AG04450 (cell line): ENCODE measurements at regions of chr1 and their contacts with region 1.

Region 1: GRCh38 chr1:203273206-203273868 is 32.0 kb upstream of the BTG2 start:
- DNase-seq: no peak
- H3K4me3 ChIP-seq: 0 out of 2 replicates have a peak overlapping the region, but pooled peaks have one; percentile 20
- H3K27ac ChIP-seq: no peak overlapping the region
- H3K27me3 ChIP-seq: peaks cover 9% of the 10 kb centered on the region
- CTCF ChIP-seq: peak; percentile 98

Region 2: DNA sequence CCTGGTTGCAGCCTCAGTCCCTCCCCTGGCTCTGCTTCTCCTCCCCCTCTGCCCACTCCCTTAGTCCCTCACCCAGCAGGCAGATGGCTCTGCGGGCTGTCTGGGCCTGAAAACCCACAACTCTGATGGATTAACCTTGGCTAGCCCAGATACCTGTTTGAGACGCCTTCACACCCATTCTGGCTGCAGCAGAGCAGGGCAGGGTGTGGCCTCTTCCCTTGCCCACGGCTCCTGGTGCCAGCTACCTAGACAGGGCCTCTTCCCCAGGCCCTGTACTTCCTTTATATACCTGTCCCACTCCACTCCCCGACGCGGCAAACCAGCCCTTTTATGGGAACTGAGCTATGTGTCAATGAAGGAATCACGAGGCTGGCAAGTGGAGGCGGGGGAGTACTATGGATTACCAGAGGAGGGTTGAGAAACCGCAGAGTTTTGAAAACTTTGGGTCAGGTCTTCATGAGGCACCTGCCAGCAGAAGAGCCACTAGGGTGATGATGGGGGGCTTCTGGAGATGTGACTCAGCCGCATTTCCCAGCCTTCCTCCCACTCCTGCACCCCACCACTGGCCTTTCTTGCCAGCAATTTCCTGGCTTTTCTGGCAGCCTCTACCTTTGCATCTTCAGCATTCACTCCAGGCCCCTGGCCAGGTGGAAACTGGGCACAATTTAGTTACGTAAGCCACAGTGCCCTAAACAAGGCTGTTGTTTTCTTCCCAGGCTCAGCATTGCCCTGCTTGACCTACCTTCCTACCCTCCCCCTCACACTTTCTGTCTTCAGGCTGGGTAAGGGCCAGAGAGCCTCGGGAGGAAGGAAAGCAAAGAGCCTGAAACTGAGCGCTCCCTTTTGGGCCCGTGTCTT is 86.7 kb before region 1 on chr1 and contains the start of gene CHI3L1:
- CTCF ChIA-PET with region 1: no interaction called
- POLR2A ChIA-PET with region 1: no interaction called
- DNase-seq: no peak
- H3K4me3 ChIP-seq: no peak within 1 kb of the TSS
- H3K27ac ChIP-seq: no peak within 1 kb of the TSS
- H3K27me3 ChIP-seq: peaks cover 10% of the 10 kb centered on the region
- CTCF ChIP-seq: no peak
- polyA plus RNA-seq, gene CHI3L1: 6.4 and 8.9 TPM in 2 replicates

Region 3: DNA sequence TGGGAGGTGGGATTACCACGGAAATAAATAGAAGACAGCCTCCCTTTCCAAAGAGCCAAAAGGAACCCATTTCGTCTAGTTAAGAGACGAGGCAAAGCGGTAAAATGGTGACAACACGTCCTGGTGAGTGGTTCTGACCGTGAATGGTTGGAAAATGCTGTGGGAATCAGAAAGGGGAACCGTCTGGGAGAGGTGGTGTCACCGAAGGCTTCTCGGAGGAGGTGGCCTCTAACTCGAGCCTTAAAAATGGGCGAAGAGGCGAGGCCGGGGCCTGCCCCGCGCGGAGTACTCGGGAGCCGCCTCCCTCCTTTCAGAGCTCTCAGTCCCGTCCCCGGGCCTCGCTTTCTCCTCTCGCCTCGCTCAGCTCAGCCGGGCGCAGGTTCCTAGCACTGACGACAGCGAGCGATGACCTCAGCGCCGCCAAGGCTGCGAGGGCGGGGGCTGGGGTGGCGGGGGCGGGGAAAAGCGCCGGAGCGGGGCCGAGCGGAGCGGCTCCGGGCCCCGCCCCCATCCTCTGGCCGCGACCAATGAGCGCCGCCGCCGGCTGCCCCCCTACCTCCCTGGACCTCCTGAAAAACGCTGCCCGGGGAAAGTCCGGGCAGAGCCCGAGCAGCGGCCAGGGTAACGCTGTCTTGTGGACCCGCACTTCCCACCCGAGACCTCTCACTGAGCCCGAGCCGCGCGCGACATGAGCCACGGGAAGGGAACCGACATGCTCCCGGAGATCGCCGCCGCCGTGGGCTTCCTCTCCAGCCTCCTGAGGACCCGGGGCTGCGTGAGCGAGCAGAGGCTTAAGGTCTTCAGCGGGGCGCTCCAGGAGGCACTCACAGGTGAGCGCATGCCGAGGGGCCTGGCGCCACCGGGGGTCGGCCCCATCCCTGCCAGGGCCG is 31.8 kb after region 1 on chr1 and contains the start of gene BTG2:
- CTCF ChIA-PET with region 1: interaction called, 14 read pairs
- POLR2A ChIA-PET with region 1: interaction called, 12 read pairs
- DNase-seq: peak; percentile 61
- H3K4me3 ChIP-seq: peak within 1 kb of the TSS; percentile 87
- H3K27ac ChIP-seq: peak within 1 kb of the TSS; percentile 68
- H3K27me3 ChIP-seq: peaks cover 19% of the 10 kb centered on the region
- CTCF ChIP-seq: no peak
- polyA plus RNA-seq, gene BTG2: 34.7 and 36.5 TPM in 2 replicates

Region 4: DNA sequence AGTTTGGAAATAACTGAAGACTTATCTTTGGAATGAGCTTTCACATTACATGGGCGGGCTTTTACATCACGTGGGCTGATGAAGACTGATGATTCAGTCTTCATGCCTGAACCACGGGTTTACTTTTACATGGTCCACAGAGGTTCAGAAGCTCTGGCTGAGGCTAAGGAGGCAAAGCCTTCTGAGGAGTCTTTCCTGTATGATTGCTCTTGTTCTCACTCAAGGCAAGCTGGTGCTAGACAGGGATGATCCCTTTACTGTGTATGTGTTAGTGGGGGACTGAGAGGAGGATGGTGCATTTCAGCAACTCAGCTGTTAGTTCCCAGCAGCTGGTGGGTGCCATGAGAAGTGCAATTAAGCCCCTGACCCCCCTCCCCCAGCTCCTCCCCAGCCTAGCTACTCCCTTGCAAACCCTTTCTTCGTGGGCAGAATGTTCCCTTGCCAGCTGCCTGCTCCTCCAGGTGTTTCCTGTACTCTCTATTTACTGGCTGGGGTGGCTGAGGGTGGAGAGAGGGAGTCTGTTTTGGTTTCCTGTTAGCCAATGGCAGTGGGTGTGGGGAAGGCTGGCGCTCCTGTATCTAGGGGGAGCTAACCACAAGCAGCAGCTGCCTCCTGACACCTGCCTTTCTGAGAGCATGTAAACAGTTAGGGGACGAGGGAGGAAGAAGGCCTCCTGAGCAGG is 47.4 kb after region 1 on chr1:
- CTCF ChIA-PET with region 1: interaction called, 84 read pairs
- POLR2A ChIA-PET with region 1: no interaction called
- DNase-seq: no peak
- H3K4me3 ChIP-seq: no peak overlapping the region
- H3K27ac ChIP-seq: peak overlapping the region; percentile 39
- H3K27me3 ChIP-seq: peaks cover 62% of the 10 kb centered on the region
- CTCF ChIP-seq: no peak

Region 5: GRCh38 chr1:203326830-203327683 is 53.7 kb after region 1 on chr1:
- CTCF ChIA-PET with region 1: interaction called, 84 read pairs
- POLR2A ChIA-PET with region 1: interaction called, 6 read pairs
- DNase-seq: peak; percentile 51
- H3K4me3 ChIP-seq: peak overlapping the region; percentile 67
- H3K27ac ChIP-seq: peak overlapping the region; percentile 39
- H3K27me3 ChIP-seq: peaks cover 55% of the 10 kb centered on the region
- CTCF ChIP-seq: no peak